WTC11 (cell line): ENCODE measurements at regions of chr10 and their contacts with region 1.

Region 1: DNA sequence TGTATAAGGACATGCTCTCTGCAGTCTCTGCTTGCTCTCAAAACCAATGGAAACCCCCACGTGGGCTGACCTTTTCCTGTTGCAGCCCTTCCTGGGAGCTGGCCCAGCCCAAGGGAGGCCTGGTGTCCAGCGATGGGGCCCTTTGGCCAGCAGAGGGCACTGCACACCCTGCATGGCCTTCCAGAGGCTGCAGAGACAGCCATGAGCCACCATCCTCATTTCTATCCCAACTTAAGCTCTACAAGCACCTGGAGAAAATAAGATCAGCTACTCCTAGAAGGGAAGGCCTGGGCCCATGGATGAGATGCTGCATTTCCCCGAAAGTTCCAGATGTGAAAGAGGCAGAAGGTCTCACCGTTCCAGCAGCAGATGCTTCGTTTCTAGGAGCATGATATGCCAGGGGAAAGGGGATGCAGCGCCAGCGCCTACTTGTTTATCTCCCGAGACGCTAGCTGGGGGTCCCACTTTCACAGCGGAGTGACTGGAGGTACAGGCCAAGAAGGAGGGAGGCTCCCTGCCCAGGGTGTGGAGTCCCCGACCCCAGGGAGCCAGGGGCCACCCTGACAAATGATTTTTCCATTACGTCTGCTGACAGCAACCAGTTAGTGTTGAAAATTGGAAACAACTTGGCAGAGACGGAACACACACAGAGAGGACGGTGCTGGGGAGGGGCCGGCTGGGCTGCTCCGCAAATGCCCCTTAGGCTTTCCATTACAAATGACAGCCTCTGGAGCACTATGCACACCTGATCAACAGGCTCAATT is 106.4 kb downstream of the ZRANB1 start:
- DNase-seq: peak; percentile 95
- ATAC-seq: peak; percentile 88
- H3K4me3 Mint-ChIP-seq: peak overlapping the region; percentile 3; the same call in 1 of the 2 replicates
- H3K27ac Mint-ChIP-seq: peak overlapping the region; percentile 94
- H3K4me1 Mint-ChIP-seq: peaks cover 93% of the 10 kb centered on the region
- H3K27me3 Mint-ChIP-seq: no peaks in the 10 kb centered on the region
- CTCF ChIP-seq: peak; percentile 86

Region 2: DNA sequence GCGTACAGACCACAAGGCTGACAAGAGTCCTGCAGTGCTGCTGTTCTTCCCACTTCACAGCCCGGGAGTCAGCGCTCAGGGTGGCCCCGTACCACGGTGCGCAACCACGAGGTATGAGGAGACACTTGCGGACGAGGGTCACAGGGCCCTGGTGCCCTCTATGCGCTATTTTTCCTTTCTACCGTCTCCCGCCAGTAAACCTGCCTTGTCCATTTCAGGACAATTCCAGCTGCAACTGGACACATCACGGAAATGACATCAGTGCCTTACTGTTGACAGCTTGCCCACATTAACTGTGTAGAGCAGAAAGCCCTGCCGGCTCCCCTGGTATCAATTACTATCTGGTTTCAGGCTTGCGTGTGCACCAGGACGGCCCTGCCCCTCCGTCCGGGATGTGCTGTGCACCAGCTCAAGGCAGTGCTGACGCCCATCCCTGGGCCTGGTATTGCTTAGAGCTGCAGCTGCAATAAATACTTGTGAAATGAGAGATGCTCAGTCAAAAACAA is 41.3 kb before region 1 on chr10:
- CTCF ChIA-PET with region 1: interaction called, 15 read pairs
- POLR2A ChIA-PET with region 1: no interaction called
- DNase-seq: no peak
- ATAC-seq: no peak
- H3K4me3 Mint-ChIP-seq: no peak overlapping the region
- H3K27ac Mint-ChIP-seq: peak overlapping the region; percentile 84
- H3K4me1 Mint-ChIP-seq: peaks cover 38% of the 10 kb centered on the region
- H3K27me3 Mint-ChIP-seq: no peaks in the 10 kb centered on the region
- CTCF ChIP-seq: no peak

Region 3: DNA sequence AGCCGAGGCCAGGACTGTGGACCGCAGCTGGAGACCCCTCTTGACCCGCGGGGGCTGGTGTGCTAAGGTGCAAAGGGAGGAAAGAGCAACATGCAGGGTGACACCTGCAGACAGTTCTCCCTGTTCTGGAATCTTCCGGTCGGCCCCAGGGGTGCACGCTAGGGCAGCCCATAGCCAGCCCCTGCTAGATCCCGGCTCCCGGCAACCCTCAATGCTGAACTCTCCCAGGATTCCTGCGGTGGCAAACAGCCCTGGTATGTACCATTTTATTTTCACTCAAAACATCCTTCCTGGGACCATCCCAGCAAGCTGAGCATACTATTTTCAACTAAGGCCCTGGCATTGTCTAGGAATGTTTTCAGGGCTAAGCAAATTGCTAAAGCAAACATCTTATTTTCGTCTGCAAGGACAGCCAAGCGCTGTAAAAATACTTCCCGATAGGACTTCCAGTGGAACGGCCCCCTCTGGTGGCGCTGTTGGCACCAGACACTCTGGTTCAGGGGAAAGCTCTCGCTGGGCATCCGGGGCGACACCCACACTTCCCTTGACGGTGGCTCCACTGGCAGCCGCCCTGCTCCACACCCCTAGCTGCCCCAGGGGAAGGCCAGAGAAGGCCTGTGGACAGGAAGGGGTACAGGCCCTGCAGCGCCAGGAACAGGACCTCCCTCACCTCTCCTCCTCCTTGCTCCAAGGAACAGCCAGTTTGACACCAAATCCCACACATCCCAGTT is 12.7 kb after region 1 on chr10:
- CTCF ChIA-PET with region 1: interaction called, 74 read pairs
- POLR2A ChIA-PET with region 1: interaction called, 5 read pairs
- DNase-seq: peak; percentile 74
- ATAC-seq: peak; percentile 73
- H3K4me3 Mint-ChIP-seq: no peak overlapping the region
- H3K27ac Mint-ChIP-seq: peak overlapping the region; percentile 88
- H3K4me1 Mint-ChIP-seq: peaks cover 91% of the 10 kb centered on the region
- H3K27me3 Mint-ChIP-seq: no peaks in the 10 kb centered on the region
- CTCF ChIP-seq: peak; percentile 56

Region 4: GRCh38 chr10:125102231-125102630 is 53.9 kb after region 1 on chr10:
- CTCF ChIA-PET with region 1: interaction called, 13 read pairs
- POLR2A ChIA-PET with region 1: no interaction called
- DNase-seq: no peak
- ATAC-seq: peak; percentile 9
- H3K4me3 Mint-ChIP-seq: no peak overlapping the region
- H3K27ac Mint-ChIP-seq: peak overlapping the region; percentile 84
- H3K4me1 Mint-ChIP-seq: peaks cover 94% of the 10 kb centered on the region
- H3K27me3 Mint-ChIP-seq: no peaks in the 10 kb centered on the region
- CTCF ChIP-seq: no peak

Region 5: GRCh38 chr10:125163803-125164202 is 115.5 kb after region 1 on chr10:
- CTCF ChIA-PET with region 1: no interaction called
- POLR2A ChIA-PET with region 1: no interaction called
- DNase-seq: no peak
- ATAC-seq: no peak
- H3K4me3 Mint-ChIP-seq: no peak overlapping the region
- H3K27ac Mint-ChIP-seq: no peak overlapping the region
- H3K4me1 Mint-ChIP-seq: peaks cover 18% of the 10 kb centered on the region
- H3K27me3 Mint-ChIP-seq: no peaks in the 10 kb centered on the region
- CTCF ChIP-seq: no peak